ENCODE measurements at regions of chr11 and their contacts with region 1.

Region 1: GRCh38 chr11:116691771-116692177 is 81.0 kb downstream of the BUD13 start:
- DNase-seq: peak; percentile 91
- H3K4me3 ChIP-seq: peak overlapping the region in 1 of 2 experiments; percentile 24; a peak in 1 of 4 replicates
- H3K27ac ChIP-seq: no peak overlapping the region
- H3K4me1 ChIP-seq: peaks cover 0 to 18% of the 10 kb centered on the region in 2 experiments; a peak in 1 of 4 replicates
- H3K27me3 ChIP-seq: no peaks in the 10 kb centered on the region
- CTCF ChIP-seq: peak; percentile 91
- EP300 ChIP-seq: no peak
- RAD21 ChIP-seq: peak; percentile 94

Region 2: GRCh38 chr11:115065830-115066664 is 1625.7 kb before region 1 on chr11:
- CTCF ChIA-PET with region 1: no interaction called
- POLR2A ChIA-PET with region 1: no interaction called
- DNase-seq: no peak
- H3K4me3 ChIP-seq: no peak overlapping the region
- H3K27ac ChIP-seq: no peak overlapping the region
- H3K4me1 ChIP-seq: peaks cover 0 to 23% of the 10 kb centered on the region in 2 experiments; a peak in 1 of 4 replicates
- H3K27me3 ChIP-seq: no peaks in the 10 kb centered on the region
- CTCF ChIP-seq: no peak
- EP300 ChIP-seq: no peak
- RAD21 ChIP-seq: no peak

Region 3: GRCh38 chr11:116680349-116681125 is 11.2 kb before region 1 on chr11:
- CTCF ChIA-PET with region 1: interaction called, 17 read pairs
- POLR2A ChIA-PET with region 1: no interaction called
- DNase-seq: no peak
- H3K4me3 ChIP-seq: no peak overlapping the region
- H3K27ac ChIP-seq: no peak overlapping the region
- H3K4me1 ChIP-seq: no peaks in the 10 kb centered on the region
- H3K27me3 ChIP-seq: no peaks in the 10 kb centered on the region
- CTCF ChIP-seq: no peak; the same call in 1 of the 2 replicates
- EP300 ChIP-seq: no peak
- RAD21 ChIP-seq: no peak

Region 4: GRCh38 chr11:116703421-116703820 is 11.6 kb after region 1 on chr11:
- CTCF ChIA-PET with region 1: interaction called, 36 read pairs
- POLR2A ChIA-PET with region 1: no interaction called
- DNase-seq: peak; percentile 94
- H3K4me3 ChIP-seq: no peak overlapping the region
- H3K27ac ChIP-seq: peak overlapping the region in 1 of 2 experiments; percentile 95; a peak in 2 of 4 replicates
- H3K4me1 ChIP-seq: peaks cover 0 to 24% of the 10 kb centered on the region in 2 experiments; a peak in 1 of 4 replicates
- H3K27me3 ChIP-seq: no peaks in the 10 kb centered on the region
- CTCF ChIP-seq: no peak
- EP300 ChIP-seq: peak in 1 of 2 experiments; percentile 38; a peak in 1 of 4 replicates
- RAD21 ChIP-seq: peak; percentile 31

Region 5: GRCh38 chr11:116787786-116788486 is 96.2 kb after region 1 on chr11 and contains the start of gene ZPR1:
- CTCF ChIA-PET with region 1: no interaction called
- POLR2A ChIA-PET with region 1: no interaction called
- DNase-seq: peak; percentile 96
- H3K4me3 ChIP-seq: peak within 1 kb of the TSS; percentile 75 to 93
- H3K27ac ChIP-seq: peak within 1 kb of the TSS; percentile 58 to 70
- H3K4me1 ChIP-seq: peaks cover 5 to 20% of the 10 kb centered on the region in 2 experiments; a peak in 3 of 4 replicates
- H3K27me3 ChIP-seq: no peaks in the 10 kb centered on the region
- CTCF ChIP-seq: no peak
- EP300 ChIP-seq: no peak
- RAD21 ChIP-seq: no peak
- polyA plus RNA-seq, gene ZPR1: 52.4 and 69.2 TPM in 2 replicates